ENCODE measurements at regions of chr1 and their contacts with region 1.

Region 1: DNA sequence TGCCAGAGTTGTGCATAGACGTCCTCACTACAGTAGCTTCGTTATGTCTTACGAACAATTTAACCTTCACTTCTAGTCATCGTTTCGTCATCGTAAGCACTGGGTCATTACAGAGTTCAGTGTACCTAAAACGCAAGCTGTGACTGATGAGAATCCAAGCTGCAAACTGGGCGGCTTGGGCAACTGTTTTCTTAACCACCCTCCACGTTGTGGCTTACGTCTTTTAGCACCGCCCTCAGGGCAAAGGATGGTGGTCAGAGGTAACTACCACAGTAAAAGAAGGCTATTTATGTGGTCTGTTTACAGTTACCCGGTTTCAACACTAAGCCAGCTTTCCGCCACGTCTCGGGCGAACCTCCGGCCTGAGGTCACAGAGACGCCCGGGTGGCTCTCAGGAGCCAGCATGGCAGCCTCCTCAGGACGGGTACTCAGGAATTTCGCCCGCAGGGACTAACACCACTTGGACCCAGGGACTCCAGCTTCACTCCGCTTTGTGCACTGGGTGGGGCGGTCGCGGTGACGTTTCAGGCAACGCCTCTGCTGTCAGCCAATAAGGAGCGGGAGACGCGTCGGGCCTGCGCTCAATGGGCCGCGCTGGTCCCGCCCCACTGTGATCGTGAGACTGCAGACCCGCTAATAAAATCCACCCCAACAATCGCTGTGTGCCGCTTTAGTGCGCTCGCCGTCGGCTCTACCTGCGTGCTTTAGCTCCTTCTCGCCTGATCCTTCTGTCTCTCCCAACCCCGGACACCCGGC is at the start of gene CTH:
- DNase-seq: peak; percentile 90 to 95 (median 92)
- H3K4me3 ChIP-seq: peak within 1 kb of the TSS; percentile 94
- H3K4me3 Mint-ChIP-seq: peak within 1 kb of the TSS; percentile 94 to 99 (median 97)
- H3K27ac ChIP-seq: peak within 1 kb of the TSS; percentile 92
- H3K27ac Mint-ChIP-seq: peak within 1 kb of the TSS; percentile 96 to 98 (median 98)
- H3K4me1 ChIP-seq: peaks cover 18% of the 10 kb centered on the region
- H3K4me1 Mint-ChIP-seq: peaks cover 23 to 28% (median 26%) of the 10 kb centered on the region in 3 donors
- H3K27me3 ChIP-seq: no peaks in the 10 kb centered on the region
- H3K27me3 Mint-ChIP-seq: peaks cover 4 to 12% of the 10 kb centered on the region in 2 donors
- total RNA-seq, gene CTH: 9.0 to 9.5 TPM

Region 2: GRCh38 chr1:70354332-70355110 is 56.3 kb before region 1 on chr1 and contains the start of gene ANKRD13C:
- CTCF ChIA-PET with region 1: interaction called, 21 read pairs
- POLR2A ChIA-PET with region 1: interaction called, 67 read pairs
- DNase-seq: peak; percentile 81 to 95 (median 94)
- H3K4me3 ChIP-seq: peak within 1 kb of the TSS; percentile 78
- H3K4me3 Mint-ChIP-seq: peak within 1 kb of the TSS; percentile 94 to 99 (median 96)
- H3K27ac ChIP-seq: peak within 1 kb of the TSS; percentile 98
- H3K27ac Mint-ChIP-seq: peak within 1 kb of the TSS; percentile 95 to 100 (median 98)
- H3K4me1 ChIP-seq: peaks cover 36% of the 10 kb centered on the region
- H3K4me1 Mint-ChIP-seq: peaks cover 43 to 61% (median 58%) of the 10 kb centered on the region in 3 donors
- H3K27me3 ChIP-seq: no peaks in the 10 kb centered on the region
- H3K27me3 Mint-ChIP-seq: peaks cover 0 to 6% of the 10 kb centered on the region in 2 donors
- total RNA-seq, gene ANKRD13C: 29.4 to 30.9 TPM

Region 3: GRCh38 chr1:70436622-70437251 is 26.0 kb after region 1 on chr1:
- CTCF ChIA-PET with region 1: no interaction called
- POLR2A ChIA-PET with region 1: no interaction called
- DNase-seq: no peak
- H3K4me3 ChIP-seq: no peak overlapping the region
- H3K4me3 Mint-ChIP-seq: no peak overlapping the region
- H3K27ac ChIP-seq: no peak overlapping the region
- H3K27ac Mint-ChIP-seq: no peak overlapping the region
- H3K4me1 ChIP-seq: no peaks in the 10 kb centered on the region
- H3K4me1 Mint-ChIP-seq: no peaks in the 10 kb centered on the region
- H3K27me3 ChIP-seq: no peaks in the 10 kb centered on the region
- H3K27me3 Mint-ChIP-seq: no peaks in the 10 kb centered on the region